ENCODE measurements at regions of chr13 and their contacts with region 1.

Region 1: DNA sequence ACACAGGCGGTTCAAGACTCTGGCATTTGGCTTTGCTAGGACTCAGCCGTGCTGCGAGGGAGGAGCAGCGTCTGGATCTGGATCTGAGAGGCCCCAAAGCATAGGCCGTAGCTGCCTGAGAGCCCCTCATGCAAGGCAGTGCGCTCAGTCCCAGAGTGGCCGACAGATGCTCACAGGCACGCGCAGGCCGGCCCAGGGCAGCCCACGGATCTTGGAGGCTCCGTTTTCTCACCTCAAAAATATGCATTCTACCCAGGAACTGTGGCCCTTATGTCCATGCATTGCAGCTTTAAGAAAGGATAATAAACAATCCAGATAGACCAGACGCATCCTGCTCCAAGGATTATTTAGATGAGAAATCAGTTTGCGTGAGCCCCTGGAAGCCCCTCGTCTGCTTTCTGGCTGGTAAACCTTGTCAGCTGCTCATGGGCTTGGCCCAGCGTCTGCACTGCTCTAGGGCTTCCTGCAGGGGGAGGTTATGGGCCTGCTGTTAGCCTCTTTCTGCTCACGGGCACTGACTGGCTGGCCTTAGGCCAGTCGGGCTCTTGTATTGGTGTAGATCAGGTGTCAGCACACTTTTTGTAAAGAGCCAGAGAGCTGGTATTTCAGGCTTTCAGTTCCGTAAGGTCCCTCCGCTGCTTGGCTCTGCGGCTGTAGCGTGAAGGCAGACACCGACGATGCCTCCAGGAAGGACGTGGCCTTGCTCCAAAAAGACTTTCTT is 24.2 kb downstream of the TEX29 start:
- DNase-seq: peak; percentile 85
- ATAC-seq: peak; percentile 100
- H3K4me3 Mint-ChIP-seq: no peak overlapping the region
- H3K27ac Mint-ChIP-seq: peak overlapping the region; percentile 74
- H3K4me1 Mint-ChIP-seq: peaks cover 10% of the 10 kb centered on the region
- H3K27me3 Mint-ChIP-seq: no peaks in the 10 kb centered on the region
- CTCF ChIP-seq: peak; percentile 55

Region 2: GRCh38 chr13:111232191-111232590 is 112.4 kb before region 1 on chr13:
- CTCF ChIA-PET with region 1: no interaction called
- POLR2A ChIA-PET with region 1: no interaction called
- DNase-seq: no peak
- ATAC-seq: no peak
- H3K4me3 Mint-ChIP-seq: no peak overlapping the region
- H3K27ac Mint-ChIP-seq: no peak overlapping the region; the same call in 1 of the 2 replicates
- H3K4me1 Mint-ChIP-seq: peaks cover 19% of the 10 kb centered on the region
- H3K27me3 Mint-ChIP-seq: no peaks in the 10 kb centered on the region
- CTCF ChIP-seq: no peak

Region 3: DNA sequence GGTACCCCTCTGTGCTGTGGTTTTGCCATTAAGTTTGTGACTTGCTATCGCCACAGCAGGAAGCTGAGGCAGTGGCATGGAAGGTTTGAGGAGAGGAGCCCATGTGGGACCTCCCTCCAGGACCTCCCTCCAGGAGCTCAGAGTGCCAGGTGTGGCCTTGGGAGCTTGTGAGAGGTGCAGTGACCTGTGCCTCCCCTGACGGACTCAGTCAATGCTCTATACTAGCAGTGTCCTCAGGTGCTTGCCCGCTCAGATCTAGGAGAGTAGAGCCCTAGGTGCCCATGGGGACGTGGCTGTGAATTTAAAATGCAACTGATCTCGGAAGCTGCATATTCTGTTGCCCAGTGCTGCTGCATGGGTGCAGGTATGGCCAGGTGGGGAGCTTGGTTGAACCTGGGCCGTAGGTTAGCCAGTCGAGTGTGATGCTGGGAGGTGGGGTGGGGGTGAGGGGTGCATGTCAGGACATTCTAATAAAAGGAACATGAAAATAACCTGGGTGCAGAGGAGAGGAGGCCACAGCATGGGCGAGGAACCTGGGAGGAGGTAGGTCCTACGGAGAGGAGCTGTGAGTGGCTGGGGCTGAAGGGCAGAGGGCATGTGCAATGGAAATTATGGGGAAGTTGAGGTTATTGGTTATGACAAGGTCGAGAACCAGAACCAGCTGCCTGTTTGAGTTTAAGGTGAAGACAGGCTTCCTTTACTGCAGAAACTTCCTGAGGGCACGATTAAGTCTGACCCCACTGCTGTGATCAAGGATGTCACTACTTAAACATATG is 17.4 kb after region 1 on chr13:
- CTCF ChIA-PET with region 1: interaction called, 10 read pairs
- POLR2A ChIA-PET with region 1: no interaction called
- DNase-seq: no peak
- ATAC-seq: no peak
- H3K4me3 Mint-ChIP-seq: no peak overlapping the region
- H3K27ac Mint-ChIP-seq: no peak overlapping the region
- H3K4me1 Mint-ChIP-seq: peaks cover 20% of the 10 kb centered on the region
- H3K27me3 Mint-ChIP-seq: 0 out of 2 replicates have a peak, but pooled peaks cover 2% of the 10 kb centered on the region
- CTCF ChIP-seq: no peak

Region 4: GRCh38 chr13:111398715-111399299 is 54.2 kb after region 1 on chr13:
- CTCF ChIA-PET with region 1: interaction called, 19 read pairs
- POLR2A ChIA-PET with region 1: no interaction called
- DNase-seq: no peak
- ATAC-seq: no peak
- H3K4me3 Mint-ChIP-seq: no peak overlapping the region
- H3K27ac Mint-ChIP-seq: no peak overlapping the region
- H3K4me1 Mint-ChIP-seq: no peaks in the 10 kb centered on the region
- H3K27me3 Mint-ChIP-seq: no peaks in the 10 kb centered on the region
- CTCF ChIP-seq: no peak

Region 5: DNA sequence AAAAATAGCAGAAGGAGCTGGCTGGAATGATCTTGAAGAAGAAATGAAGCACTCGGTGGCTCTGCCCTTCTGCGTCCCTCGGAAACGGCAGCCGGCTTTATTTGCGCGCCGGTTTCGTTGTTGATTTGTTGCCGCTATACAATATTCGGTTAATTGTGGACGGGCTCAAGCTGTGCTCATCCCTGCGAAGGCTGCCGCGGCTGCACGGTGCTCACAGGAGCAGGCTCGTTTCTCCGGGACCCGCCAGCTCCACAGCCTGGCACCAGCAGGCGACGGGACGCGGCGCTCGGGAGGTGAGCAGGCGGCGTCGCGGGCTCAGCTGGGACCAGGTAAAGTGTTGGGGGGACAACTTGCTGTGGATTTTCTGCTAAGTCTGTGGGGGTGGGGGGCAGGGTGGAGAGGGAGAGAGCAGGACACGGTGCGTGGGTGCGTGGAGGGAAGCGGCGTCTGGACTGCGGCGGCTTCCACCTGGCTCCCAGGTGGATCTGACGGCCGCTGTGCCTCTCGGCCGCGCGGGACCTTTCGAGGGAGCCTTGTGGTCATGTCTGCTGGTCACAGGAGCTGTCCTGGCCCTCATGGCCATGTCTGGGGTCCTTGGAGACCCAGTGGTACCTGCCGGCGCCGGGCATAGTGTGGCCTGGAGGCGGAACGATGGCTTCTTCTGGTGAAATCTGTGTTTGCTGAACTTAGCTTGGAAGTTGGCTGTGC is 66.7 kb after region 1 on chr13:
- CTCF ChIA-PET with region 1: interaction called, 11 read pairs
- POLR2A ChIA-PET with region 1: no interaction called
- DNase-seq: no peak
- ATAC-seq: peak; percentile 34; the same call in 1 of the 2 replicates
- H3K4me3 Mint-ChIP-seq: no peak overlapping the region
- H3K27ac Mint-ChIP-seq: no peak overlapping the region
- H3K4me1 Mint-ChIP-seq: peaks cover 23% of the 10 kb centered on the region
- H3K27me3 Mint-ChIP-seq: peaks cover 19% of the 10 kb centered on the region
- CTCF ChIP-seq: no peak

Region 6: DNA sequence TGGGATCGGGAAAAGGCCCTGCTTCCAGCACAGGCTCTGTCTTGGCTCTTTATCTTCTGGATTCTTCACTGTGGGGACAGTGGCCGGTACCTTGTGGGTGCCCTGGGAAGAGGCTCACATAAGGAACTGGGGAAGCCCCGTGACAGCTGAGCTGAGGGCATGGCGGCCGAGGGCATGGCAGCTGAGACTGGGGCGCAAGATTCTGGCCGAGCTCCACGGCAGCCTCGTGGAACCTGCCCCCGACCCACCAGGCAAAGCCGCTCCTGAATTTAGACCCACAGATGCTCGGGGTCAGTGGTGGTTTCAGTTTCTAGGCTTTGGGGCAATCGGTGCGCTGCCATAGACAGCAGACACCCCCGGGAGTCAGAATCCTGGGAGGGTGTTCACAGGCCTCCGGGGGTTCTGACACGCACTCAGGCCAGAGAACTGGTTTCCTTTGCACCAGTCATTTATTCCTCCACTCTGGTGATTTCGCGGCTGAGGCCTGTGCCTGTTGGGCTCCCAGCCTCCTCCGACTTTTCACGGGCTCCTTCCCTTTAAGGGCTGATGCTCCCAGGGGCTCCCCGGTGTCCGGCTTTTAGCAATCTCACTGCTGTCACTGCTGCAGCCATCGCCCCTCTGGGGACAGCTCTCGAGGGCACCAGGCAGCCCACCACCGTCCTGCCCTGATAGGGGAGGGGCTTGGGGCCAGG is 93.4 kb after region 1 on chr13:
- CTCF ChIA-PET with region 1: interaction called, 19 read pairs
- POLR2A ChIA-PET with region 1: no interaction called
- DNase-seq: no peak
- ATAC-seq: no peak
- H3K4me3 Mint-ChIP-seq: no peak overlapping the region
- H3K27ac Mint-ChIP-seq: no peak overlapping the region
- H3K4me1 Mint-ChIP-seq: peaks cover 5% of the 10 kb centered on the region; the same call in 1 of the 2 replicates
- H3K27me3 Mint-ChIP-seq: peaks cover 4% of the 10 kb centered on the region
- CTCF ChIP-seq: no peak

Measured in WTC11 (cell line).